ENCODE measurements at regions of chr17 and their contacts with region 1.

Region 1: GRCh38 chr17:64920026-64920418 is 744 bp upstream of the LRRC37A3 start:
- DNase-seq: no peak
- ATAC-seq: no peak
- H3K4me3 Mint-ChIP-seq: peak overlapping the region; percentile 73
- H3K27ac Mint-ChIP-seq: peak overlapping the region; percentile 70
- H3K4me1 Mint-ChIP-seq: peaks cover 7% of the 10 kb centered on the region
- H3K27me3 Mint-ChIP-seq: no peaks in the 10 kb centered on the region

Region 2: DNA sequence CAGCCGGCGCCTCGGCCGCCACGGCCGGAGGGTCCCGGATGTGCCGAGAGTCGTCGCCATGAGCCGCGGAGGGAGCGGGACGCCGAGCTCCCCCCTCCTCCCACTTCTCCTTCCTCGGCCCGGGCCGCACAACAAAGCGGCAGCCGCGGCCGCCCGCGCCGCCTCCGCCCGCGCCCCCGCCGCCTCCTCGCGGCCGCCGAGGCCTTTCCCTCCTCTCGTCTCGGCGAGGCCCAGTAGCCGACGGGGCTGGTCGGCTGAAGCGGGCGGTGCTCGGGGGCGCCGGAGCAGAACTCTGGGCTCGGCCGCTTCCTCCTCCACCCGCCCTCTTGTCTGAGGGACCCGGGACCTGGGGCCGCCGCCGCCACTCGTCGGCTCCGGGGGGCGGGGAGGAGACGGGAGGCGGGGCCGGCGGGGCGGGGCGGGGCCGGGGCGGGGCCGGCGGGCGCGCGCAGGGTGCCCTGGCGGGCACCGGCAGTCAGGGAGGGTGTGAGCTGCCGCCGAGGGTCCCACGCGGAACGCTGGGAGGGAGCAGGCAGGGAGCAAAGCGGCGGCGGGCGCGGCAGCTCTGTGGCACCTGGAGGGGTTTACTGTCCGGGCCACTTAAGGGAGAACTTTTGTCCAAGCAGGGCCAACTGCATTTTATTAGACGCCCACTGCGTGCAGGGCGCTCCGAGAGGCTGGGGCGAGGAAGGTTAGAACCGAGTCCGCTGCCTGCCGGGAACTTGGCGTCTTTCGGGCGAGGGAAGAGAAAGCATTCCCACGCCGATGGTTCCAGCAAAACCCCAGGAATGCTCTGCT is 257.8 kb before region 1 on chr17 and contains the start of gene SMURF2:
- CTCF ChIA-PET with region 1: no interaction called
- POLR2A ChIA-PET with region 1: no interaction called
- intact Hi-C with region 1: loop called in 1 of 2 experiments (anchors 5 kb)
- DNase-seq: peak; percentile 89
- ATAC-seq: peak; percentile 82
- H3K4me3 Mint-ChIP-seq: peak within 1 kb of the TSS; percentile 98
- H3K27ac Mint-ChIP-seq: peak within 1 kb of the TSS; percentile 92
- H3K4me1 Mint-ChIP-seq: peaks cover 27% of the 10 kb centered on the region
- H3K27me3 Mint-ChIP-seq: no peaks in the 10 kb centered on the region
- total RNA-seq, gene SMURF2: 13.9 to 15.0 TPM

Region 3: DNA sequence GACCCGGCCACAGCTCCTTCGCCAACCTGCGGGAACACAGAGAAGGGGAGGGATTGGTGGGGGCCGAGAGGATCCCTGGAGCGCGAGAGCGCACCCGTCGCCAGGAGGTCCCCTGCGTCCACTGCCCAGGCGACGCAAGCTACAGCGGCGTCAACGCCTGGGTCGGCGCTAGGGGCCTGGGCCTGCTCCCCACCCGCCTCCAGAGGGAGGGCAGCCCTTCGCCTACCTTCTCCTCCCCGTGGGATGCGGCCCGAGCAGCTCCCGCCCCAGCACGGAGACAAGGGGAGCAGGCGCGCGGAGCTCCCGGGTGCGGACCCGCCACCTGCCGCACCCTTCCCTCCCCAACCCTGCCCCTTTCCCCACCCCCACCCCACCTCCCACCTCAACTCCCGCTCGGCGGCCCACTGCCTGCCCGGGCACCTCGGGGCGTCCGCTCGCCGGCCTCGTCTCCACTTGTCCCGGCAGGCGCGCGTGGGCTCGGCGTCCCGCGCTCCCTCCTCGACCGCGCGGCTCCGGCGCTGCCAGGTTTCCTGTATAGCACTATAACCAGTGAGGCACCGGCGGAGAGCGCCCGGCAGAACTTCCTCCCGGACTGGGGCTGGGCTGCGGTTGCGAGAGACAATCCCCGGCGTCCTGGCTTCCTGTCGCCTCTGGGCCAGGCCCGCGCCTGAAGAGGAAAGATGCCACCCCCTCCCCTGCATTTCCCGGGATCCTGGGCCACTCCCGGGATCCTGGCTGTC is 138.8 kb before region 1 on chr17:
- CTCF ChIA-PET with region 1: interaction called, 5 read pairs
- POLR2A ChIA-PET with region 1: no interaction called
- intact Hi-C with region 1: loop called in 1 of 2 experiments (anchors 2 kb)
- DNase-seq: peak; percentile 71
- ATAC-seq: peak; percentile 28
- H3K4me3 Mint-ChIP-seq: peak overlapping the region; percentile 64
- H3K27ac Mint-ChIP-seq: no peak overlapping the region
- H3K4me1 Mint-ChIP-seq: peaks cover 34% of the 10 kb centered on the region
- H3K27me3 Mint-ChIP-seq: peaks cover 19% of the 10 kb centered on the region

Region 4: DNA sequence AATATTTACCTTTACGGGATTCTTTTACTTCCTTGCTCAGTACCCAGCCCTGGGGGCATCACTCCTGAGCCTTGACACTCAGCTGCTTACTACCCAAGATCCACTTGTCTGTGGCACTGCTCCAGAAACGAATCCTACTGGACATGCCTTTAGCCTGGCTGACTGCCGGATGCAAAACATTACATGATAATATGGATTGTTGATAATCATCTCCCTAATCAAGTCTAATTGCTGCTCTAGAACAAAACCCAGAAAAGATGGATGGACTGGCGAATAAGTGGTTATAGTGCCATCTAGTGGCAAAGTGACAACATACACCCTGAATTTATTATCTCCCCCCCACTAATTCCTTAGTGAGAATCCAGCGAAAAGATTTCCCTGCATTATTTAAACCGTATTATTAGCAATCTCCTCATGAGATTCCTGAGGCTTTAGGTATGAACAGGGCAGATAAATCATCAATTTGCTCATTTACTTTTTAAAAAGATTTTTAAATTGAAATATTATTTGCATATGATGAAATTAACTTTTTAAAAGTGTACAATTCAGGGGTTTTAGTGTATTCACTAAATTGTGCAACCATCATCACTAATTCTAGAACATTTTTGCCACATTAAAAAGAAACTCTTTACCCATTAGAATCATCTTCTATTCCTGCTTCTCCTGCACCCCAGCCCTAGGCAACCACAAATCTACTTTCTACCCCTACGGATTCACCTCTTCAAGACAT is 278.8 kb after region 1 on chr17:
- CTCF ChIA-PET with region 1: interaction called, 3 read pairs
- POLR2A ChIA-PET with region 1: no interaction called
- intact Hi-C with region 1: loop called in 1 of 2 experiments (anchors 5 kb)
- DNase-seq: no peak
- ATAC-seq: peak; percentile 70
- H3K4me3 Mint-ChIP-seq: no peak overlapping the region
- H3K27ac Mint-ChIP-seq: no peak overlapping the region
- H3K4me1 Mint-ChIP-seq: peaks cover 15% of the 10 kb centered on the region
- H3K27me3 Mint-ChIP-seq: no peaks in the 10 kb centered on the region

Measured in activated CD4-positive, alpha-beta T cell treated with anti-CD3 and anti-CD28 coated beads for 36 hours (primary cell).